BJ (cell line): ENCODE measurements at regions of chr10 and their contacts with region 1.

Region 1: GRCh38 chr10:4121502-4122380 is 336.7 kb upstream of the KLF6 start:
- DNase-seq: no peak
- H3K4me3 ChIP-seq: no peak overlapping the region
- H3K27me3 ChIP-seq: no peaks in the 10 kb centered on the region
- CTCF ChIP-seq: no peak

Region 2: DNA sequence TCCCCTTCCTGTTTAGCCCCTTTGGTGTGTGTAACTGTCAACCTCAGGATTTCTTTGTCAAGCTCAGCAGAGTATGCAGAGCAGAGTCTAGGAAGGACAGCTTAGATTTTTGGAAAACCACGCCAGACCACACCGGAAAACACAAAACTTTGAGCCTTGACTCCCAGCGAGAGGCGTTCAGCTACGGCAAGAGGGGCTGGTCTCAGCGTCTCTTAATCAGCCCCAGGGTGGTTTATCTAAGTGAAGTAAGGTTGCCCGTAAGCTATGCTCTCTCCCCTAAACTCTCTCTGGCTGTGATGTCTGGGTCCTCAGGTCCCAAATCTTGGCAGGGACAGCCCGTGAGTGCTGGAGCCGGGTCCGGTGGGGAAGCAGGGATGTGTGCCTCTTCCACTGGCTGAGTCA is 567.6 kb before region 1 on chr10:
- CTCF ChIA-PET with region 1: no interaction called
- POLR2A ChIA-PET with region 1: interaction called, 12 read pairs
- DNase-seq: no peak
- H3K4me3 ChIP-seq: no peak overlapping the region
- H3K27me3 ChIP-seq: no peaks in the 10 kb centered on the region
- CTCF ChIP-seq: no peak